ENCODE measurements at regions of chr5 and their contacts with region 1.

Region 1: GRCh38 chr5:134289509-134290113 is 63.7 kb upstream of the PPP2CA start:
- DNase-seq: peak; percentile 56
- CTCF ChIP-seq: peak; percentile 48

Region 2: DNA sequence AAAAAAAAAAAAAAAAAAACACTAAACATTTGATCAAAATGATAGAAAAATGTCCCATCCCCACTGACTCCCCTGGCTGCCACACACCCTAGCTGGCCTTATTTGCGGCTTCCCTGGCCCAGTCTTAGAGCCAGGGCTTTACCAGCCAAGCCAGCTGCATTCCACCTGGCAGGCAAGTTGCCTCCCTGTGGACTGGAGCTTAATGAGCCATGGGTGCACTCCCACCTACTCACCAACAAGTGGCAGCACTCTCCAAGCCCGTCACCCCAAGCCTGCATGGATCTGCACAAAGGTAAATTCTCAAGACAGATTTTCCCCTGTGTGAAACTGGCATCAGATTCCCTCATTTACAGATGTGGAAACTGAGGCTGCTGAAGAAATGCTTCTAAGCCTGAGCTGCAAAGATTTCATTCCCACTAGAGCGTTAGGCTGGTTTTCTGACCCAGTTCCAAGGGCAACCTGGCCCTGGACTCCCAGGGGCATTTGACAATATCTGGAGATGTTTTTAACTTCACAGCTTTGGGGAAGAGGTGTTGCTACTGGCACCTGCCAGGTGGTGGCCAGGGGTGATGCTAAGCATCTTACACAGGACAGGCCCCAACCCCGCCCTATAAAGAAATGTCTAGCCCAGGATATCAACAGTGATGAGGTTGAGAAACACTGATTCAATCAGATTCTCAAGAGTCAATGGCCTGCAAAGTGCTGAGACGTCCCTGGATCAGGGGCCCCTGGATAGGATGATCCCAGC is 262.9 kb before region 1 on chr5:
- in situ Hi-C with region 1: loop called (anchors 25 kb)
- DNase-seq: peak; percentile 80
- CTCF ChIP-seq: peak; percentile 58

Region 3: DNA sequence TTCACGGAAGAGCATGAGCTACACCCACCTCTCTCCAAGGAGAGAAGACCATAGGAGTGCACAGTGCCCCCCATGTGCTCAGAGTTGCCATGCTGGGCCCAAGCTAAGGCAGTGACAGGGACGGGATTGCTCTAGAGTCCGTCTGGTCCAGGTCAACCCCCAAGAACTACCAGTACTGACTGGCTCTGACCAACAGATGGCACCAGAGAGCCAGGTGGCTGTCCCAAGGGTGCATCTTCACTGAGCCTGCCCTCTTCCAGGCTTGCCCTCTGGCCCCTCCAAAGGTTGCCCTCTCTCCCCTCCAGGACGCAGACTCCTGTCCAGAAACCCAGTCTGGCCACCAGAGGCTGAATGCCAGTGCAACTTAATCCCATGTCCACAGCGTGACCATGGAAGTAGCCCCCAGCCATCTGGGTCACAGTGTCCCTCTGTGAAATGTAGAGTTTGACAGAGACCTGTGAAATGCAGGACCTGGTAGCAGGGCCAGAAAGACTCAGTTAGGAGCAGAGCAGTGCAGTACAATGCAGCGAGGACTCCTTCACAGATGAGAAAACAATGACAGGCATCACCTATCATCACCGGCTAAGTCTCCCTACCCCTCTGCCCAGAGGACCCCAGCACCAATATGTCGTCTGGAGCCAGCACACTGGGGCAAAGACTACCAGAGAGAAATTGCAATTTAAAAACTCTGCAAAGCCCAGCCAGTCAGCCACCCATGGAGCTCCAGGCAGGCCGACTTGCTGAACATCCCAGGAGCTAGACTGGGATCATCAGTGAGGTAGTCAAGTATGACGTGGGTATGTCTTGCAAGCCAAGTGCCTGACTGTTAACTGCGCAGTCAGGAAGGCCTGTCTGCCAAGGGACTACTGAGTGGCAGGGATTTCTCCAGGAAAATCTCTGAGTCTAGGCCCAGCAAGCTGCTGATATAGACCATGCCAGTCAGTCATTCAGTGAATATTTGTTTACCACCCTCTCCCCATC is 105.2 kb before region 1 on chr5:
- in situ Hi-C with region 1: loop called (anchors 10 kb)
- DNase-seq: peak; percentile 82
- CTCF ChIP-seq: peak; percentile 91

Measured in GM13976 (cell line).